ENCODE measurements at regions of chr2 and their contacts with region 1.

Region 1: DNA sequence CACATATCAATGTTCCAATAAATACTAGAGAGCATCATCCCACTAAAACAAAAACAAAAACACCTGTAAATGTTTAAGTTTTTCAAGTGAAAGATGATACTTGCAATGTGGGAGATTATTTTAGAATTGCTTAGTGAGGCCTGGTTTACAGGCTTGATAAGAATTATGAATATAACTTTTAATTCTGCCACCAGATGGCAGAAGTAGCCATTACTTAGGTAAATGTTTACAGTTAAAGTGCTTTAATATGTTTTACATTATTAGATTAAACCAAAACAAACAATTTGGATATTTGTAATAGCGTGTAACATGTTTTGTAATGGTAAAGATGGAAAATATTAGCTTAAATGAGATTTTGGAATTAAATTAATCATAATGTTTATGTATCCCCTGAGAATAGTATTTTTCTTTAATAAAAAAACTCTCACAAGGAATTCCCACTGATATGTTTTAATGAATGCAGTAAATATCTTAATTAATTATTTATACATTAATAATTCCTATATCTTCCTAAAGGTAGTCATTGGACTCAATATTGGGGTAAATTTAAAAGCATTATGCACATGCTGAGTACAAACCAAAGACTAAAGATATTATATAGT is 522.0 kb downstream of the SPAG16 start:
- DNase-seq: no peak
- ATAC-seq: no peak
- H3K4me3 Mint-ChIP-seq: no peak overlapping the region
- H3K27ac Mint-ChIP-seq: no peak overlapping the region
- H3K4me1 Mint-ChIP-seq: no peaks in the 10 kb centered on the region
- H3K27me3 Mint-ChIP-seq: peaks cover 2% of the 10 kb centered on the region

Region 2: DNA sequence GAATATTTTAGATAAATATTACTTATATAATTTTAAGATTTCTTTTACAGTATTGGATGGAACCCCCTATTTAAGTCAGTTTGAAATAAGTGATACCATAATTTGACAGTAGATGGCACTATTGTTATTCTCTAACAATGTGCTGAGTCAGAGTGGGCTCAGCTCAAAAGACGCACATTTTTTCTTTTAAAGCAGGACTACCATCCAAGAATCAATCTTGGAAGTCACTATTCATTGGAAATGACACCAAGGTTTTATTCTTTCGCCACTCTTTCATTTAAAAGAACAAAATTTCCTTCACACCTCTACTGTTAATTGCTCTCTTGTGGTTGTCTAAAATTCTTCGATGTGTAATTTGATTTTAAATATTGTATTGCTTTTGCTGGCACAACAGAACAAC is 554.6 kb before region 1 on chr2:
- CTCF ChIA-PET with region 1: no interaction called
- POLR2A ChIA-PET with region 1: no interaction called
- intact Hi-C with region 1: loop called in 1 of 2 experiments (anchors 5 kb)
- DNase-seq: no peak
- ATAC-seq: peak; percentile 72
- H3K4me3 Mint-ChIP-seq: no peak overlapping the region
- H3K27ac Mint-ChIP-seq: no peak overlapping the region
- H3K4me1 Mint-ChIP-seq: no peaks in the 10 kb centered on the region
- H3K27me3 Mint-ChIP-seq: no peaks in the 10 kb centered on the region

Region 3: DNA sequence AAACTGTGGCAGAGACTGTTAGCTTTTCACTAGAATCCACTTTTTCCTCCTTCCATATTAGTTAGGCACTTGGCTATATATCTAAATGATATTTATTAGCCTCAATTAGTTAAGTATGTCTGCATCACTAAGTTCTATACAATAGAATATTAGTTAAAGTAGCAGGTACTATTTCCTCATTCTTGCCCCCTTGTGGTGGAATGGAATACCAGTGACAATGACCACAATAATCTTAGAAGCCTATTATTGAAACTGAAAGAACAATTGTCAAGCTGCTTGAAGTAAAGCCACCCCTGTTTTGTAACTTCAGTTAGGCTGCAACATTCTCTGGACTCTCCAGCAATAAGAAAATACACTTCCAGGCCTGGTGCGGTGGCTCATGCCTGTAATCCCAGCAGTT is 128.3 kb after region 1 on chr2:
- CTCF ChIA-PET with region 1: no interaction called
- POLR2A ChIA-PET with region 1: no interaction called
- intact Hi-C with region 1: loop called in 1 of 2 experiments (anchors 5 kb)
- DNase-seq: no peak
- ATAC-seq: peak; percentile 44
- H3K4me3 Mint-ChIP-seq: no peak overlapping the region
- H3K27ac Mint-ChIP-seq: no peak overlapping the region
- H3K4me1 Mint-ChIP-seq: no peaks in the 10 kb centered on the region
- H3K27me3 Mint-ChIP-seq: peaks cover 2% of the 10 kb centered on the region

Region 4: GRCh38 chr2:215002500-215002899 is 1196.3 kb after region 1 on chr2:
- CTCF ChIA-PET with region 1: no interaction called
- POLR2A ChIA-PET with region 1: no interaction called
- intact Hi-C with region 1: loop called in 1 of 2 experiments (anchors 5 kb)
- DNase-seq: peak; percentile 10
- ATAC-seq: no peak
- H3K4me3 Mint-ChIP-seq: no peak overlapping the region
- H3K27ac Mint-ChIP-seq: no peak overlapping the region
- H3K4me1 Mint-ChIP-seq: no peaks in the 10 kb centered on the region
- H3K27me3 Mint-ChIP-seq: peaks cover 5% of the 10 kb centered on the region

Region 5: DNA sequence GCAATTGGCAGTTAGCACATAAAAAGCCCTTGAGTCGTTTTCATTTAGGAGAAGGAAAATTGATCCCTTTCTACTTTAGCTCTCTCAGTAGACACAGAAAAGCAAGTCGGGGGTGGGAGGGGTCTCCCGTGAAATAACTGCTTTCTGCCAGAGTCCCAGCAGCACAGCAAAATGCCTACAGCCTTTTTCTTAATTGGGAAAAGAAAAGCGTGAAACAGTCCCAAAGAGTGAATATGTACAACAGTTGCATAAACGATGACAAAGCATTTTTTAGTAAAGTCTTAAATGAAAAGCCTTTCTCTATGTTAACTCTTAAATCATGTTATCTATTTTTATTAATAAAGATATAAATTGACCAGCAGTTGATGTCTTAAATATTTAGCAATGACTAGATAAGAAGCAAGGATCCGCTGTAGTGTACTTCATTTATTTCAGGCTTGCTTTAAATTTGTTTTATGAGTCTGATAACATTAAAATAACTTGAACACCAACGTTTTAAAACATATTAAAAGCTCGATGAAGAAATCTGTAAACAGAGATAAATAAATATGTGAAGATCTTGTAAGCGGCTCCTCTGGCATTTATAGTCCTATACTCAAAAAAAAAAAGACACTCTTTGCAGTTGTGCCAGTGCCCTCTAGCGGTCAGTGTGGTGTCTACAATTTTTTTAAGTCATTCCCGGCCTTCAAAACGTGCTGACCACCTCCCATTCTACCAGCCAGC is 1463.3 kb after region 1 on chr2:
- CTCF ChIA-PET with region 1: no interaction called
- POLR2A ChIA-PET with region 1: no interaction called
- intact Hi-C with region 1: loop called in 1 of 2 experiments (anchors 5 kb)
- DNase-seq: peak; percentile 71
- ATAC-seq: no peak
- H3K4me3 Mint-ChIP-seq: no peak overlapping the region
- H3K27ac Mint-ChIP-seq: no peak overlapping the region
- H3K4me1 Mint-ChIP-seq: peaks cover 15% of the 10 kb centered on the region
- H3K27me3 Mint-ChIP-seq: peaks cover 3% of the 10 kb centered on the region